Cardiac septum (tissue), 1 donor: ENCODE measurements at regions of chr7 and their contacts with region 1.

Region 1: GRCh38 chr7:120360918-120361317 is 87.9 kb downstream of the KCND2 start:
- DNase-seq: no peak

Region 2: DNA sequence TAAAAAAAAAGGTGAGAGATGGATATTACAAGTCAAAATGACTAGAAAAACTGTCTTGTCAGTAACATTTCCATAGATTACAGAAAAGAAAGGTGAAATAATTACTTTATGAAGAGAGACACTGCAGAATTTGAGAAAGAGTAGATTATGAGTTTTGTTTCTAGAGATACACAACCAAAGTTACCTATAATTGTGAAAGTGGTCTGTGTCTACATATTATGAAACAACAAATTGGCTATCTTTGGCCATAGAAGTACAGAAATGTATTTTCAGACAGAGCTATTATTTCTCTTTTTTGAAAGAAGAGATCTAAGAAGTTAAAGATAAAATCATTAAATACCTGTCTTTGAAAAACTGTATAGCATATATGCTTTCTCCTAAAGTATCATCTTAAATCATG is 57.8 kb before region 1 on chr7:
- intact Hi-C with region 1: loop called (anchors 10 kb)
- DNase-seq: no peak

Region 3: GRCh38 chr7:120521762-120522737 is 161.1 kb after region 1 on chr7:
- intact Hi-C with region 1: no loop called
- DNase-seq: no peak